AG04450 (cell line): ENCODE measurements at regions of chr10 and their contacts with region 1.

Region 1: GRCh38 chr10:102072673-102073527 is 7.8 kb downstream of the HPS6 start:
- DNase-seq: peak; percentile 59
- H3K4me3 ChIP-seq: no peak overlapping the region
- H3K27ac ChIP-seq: no peak overlapping the region
- H3K27me3 ChIP-seq: no peaks in the 10 kb centered on the region
- CTCF ChIP-seq: peak; percentile 97

Region 2: GRCh38 chr10:101834341-101834740 is 238.6 kb before region 1 on chr10:
- CTCF ChIA-PET with region 1: interaction called, 46 read pairs
- POLR2A ChIA-PET with region 1: no interaction called
- DNase-seq: no peak
- H3K4me3 ChIP-seq: no peak overlapping the region
- H3K27ac ChIP-seq: no peak overlapping the region
- H3K27me3 ChIP-seq: no peaks in the 10 kb centered on the region
- CTCF ChIP-seq: no peak

Region 3: GRCh38 chr10:101889256-101890210 is 183.4 kb before region 1 on chr10:
- CTCF ChIA-PET with region 1: interaction called, 25 read pairs
- POLR2A ChIA-PET with region 1: no interaction called
- DNase-seq: peak; percentile 61
- H3K4me3 ChIP-seq: no peak overlapping the region
- H3K27ac ChIP-seq: no peak overlapping the region
- H3K27me3 ChIP-seq: no peaks in the 10 kb centered on the region
- CTCF ChIP-seq: peak; percentile 97

Region 4: GRCh38 chr10:102024799-102025198 is 48.1 kb before region 1 on chr10:
- CTCF ChIA-PET with region 1: interaction called, 14 read pairs
- POLR2A ChIA-PET with region 1: no interaction called
- DNase-seq: no peak
- H3K4me3 ChIP-seq: no peak overlapping the region
- H3K27ac ChIP-seq: no peak overlapping the region
- H3K27me3 ChIP-seq: no peaks in the 10 kb centered on the region
- CTCF ChIP-seq: no peak

Region 5: DNA sequence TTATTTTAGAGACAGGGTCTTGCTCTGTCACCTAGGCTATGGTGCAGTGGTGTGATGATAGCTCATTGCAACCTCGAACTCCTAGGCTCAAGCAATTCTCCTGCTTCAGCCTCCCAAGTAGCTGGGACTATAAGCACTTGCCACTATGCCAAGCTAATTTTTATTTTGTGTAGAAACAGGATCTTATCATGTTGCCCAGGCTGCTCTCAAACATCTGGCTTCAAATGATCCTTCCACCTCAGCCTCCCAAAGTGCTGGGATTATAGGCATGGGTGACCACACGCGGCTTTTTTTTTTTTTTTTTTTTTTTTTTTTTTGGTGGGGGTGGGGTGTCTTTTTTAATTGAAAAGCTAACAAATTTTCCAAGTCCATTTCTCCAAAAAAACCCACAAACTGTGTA is 10.6 kb after region 1 on chr10:
- CTCF ChIA-PET with region 1: interaction called, 51 read pairs
- POLR2A ChIA-PET with region 1: no interaction called
- DNase-seq: no peak
- H3K4me3 ChIP-seq: no peak overlapping the region
- H3K27ac ChIP-seq: no peak overlapping the region
- H3K27me3 ChIP-seq: no peaks in the 10 kb centered on the region
- CTCF ChIP-seq: no peak